ENCODE measurements at regions of chr5 and their contacts with region 1.

Region 1: DNA sequence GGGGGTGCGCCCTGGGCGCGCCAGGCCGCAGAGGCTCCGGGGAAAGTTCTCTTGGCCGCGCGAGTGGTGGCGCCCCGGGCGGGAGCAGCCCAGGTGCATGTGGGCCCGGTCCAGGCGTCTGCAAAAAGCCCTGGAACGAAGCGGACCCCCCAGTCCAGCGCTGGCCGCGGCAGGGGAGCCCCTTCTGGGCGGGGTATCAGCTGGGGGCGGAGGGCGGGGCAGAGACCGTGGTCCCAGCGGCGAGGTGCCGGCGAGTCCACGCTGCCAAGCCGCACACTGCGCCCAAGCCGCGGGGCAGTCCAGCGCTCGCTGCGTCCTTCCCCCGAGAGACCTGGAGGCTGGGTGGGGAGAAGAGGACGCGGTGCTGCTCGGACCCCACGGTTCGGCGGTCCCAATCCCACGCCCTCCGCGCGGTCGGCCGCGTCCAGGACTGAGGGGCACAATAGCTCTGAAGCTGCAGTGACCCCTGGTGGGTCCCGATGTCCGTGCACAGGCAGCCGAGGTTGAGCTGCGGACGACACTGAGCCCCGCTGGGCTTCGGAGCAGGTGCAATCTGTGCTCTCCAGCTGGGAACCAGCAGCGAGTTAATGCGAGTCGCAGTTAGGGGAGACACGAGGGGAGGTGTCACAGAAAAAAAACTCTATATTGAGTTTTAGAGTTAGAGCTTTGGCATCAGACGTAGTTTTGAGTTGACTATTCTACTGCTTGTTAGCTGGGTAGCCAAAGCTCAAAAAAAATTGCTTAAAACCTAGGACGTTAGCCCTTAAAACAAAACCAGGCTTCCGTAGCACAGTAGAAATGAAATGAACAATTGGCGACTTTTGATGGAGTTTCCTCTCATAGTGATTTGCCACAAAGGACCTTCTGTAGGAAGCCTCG is 1.1 kb upstream of the EPB41L4A start:
- DNase-seq: peak; percentile 22
- H3K4me3 ChIP-seq: peak overlapping the region; percentile 71 to 93 (median 85)
- H3K27ac ChIP-seq: peak overlapping the region; percentile 86 to 94 (median 90)
- H3K4me1 ChIP-seq: peaks cover 0 to 27% (median 0%) of the 10 kb centered on the region in 3 donors
- H3K27me3 ChIP-seq: peaks cover 0 to 17% (median 0%) of the 10 kb centered on the region in 4 donors
- CTCF ChIP-seq: peak; percentile 22 to 94 (median 84)
- POLR2A ChIP-seq: peak in 1 of 4 donors; percentile 1

Region 2: DNA sequence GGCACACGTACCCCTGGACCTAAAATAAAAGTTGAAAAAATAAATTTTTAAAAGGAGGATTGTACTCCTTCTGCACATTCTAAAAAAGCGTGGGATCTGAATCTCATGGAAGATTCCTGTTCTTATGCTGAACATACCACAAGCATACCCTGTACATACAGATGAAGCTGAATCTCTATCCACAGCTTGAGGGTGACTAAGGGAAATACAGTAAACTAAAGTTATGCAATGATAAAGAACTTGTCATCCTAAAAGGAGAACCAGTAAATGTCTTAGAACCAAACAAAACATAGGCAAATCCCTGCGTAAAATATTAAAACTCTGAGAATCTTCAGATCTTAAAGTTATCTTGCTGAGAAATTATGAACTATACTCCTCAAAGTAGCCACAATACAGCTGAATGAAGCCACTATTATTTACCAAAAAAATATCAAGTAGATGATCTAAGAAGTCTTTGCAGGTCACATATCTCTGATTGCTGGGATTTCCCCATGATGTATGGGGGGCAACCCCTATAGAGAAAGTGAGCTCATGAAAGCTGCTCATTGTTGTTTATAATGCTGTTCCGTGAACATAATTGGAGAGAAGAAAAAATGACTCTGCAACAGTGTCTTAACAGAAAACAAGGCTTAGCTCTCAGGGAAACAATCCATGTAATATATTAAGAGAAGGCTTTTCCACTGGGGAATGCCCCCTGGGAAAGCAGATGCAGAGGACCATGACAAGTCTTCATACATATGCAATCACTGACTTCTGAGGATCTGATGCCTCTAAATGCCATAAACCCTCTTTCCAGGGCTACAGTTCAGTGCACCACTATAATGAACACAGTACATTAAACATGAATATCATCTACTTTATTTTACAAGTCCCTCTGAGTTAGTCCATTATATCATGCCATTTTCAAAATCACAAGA is 211.3 kb before region 1 on chr5:
- intact Hi-C with region 1: loop called (anchors 5 kb)
- DNase-seq: no peak
- H3K4me3 ChIP-seq: no peak overlapping the region
- H3K27ac ChIP-seq: no peak overlapping the region
- H3K4me1 ChIP-seq: no peaks in the 10 kb centered on the region
- H3K27me3 ChIP-seq: no peaks in the 10 kb centered on the region
- CTCF ChIP-seq: no peak
- POLR2A ChIP-seq: no peak

Region 3: DNA sequence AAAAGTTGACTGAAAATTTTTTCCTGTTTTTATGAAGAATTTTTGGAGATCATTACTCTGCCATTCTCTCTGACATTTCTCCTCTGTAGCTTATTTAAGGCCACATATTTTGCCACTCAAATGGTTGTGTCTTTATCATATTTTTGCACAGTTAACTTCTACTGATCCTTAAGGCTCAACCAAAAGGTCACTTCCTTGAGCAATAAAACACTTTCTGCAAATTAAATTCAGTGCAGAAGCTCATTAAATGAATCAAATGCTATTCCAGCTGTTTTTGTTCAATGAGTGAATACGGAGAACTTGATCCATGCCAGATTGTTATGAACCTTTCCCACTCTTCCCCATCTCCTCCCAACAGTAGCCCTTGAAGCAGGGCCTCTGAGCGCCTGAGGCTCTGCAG is 92.7 kb after region 1 on chr5:
- intact Hi-C with region 1: no loop called
- DNase-seq: no peak
- H3K4me3 ChIP-seq: no peak overlapping the region
- H3K27ac ChIP-seq: no peak overlapping the region
- H3K4me1 ChIP-seq: no peaks in the 10 kb centered on the region
- H3K27me3 ChIP-seq: no peaks in the 10 kb centered on the region
- CTCF ChIP-seq: no peak
- POLR2A ChIP-seq: no peak